Head of caudate nucleus (tissue), 42 donors: ENCODE measurements at regions of chr14 and their contacts with region 1.

Region 1: DNA sequence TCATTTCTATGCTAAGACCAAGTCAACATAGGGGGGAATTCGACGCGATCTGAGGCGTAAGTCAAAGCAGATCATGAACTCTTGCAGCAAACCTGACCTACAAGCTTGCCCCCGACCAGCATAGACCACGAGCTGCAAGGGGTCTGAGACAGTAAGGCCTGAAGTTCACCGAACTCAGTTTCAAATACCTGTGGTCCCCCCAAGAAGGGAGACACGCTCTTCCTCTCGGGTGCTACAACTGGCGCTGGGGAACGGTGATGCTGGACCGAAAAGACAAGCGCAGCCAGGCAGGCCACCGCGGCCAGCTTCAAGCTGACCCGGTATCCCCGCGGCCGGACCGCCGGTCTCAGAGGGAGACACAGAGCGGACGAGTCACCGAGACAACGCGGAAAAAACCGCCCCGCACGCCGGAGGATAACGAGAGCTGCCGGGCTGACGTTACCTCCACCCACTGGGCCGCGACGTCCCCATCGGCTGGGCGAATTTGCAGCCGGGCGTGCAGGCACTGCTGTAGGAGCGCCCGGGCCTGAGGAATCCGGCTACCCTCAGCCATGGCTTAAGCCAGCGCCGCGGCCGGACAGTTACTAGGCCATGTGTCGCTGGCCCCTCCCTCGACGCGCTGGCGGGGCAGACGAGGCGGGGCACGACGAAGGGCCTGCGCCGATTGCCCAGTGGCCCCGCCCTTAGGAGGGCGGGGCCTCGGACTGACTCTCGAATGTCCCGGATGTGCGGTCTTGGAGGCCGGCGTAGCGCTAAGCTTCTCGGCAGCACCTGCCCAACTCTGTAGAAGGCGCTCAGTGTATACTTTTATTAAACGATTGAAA is at the start of gene DTD2:
- DNase-seq: peak; percentile 92 to 99 (median 96)

Region 2: GRCh38 chr14:31388687-31389413 is 68.2 kb before region 1 on chr14:
- intact Hi-C with region 1: no loop called
- DNase-seq: peak in 16 of 42 donors; percentile 3 to 71 (median 37)

Region 3: GRCh38 chr14:31420319-31421111 is 36.5 kb before region 1 on chr14 and contains the start of gene HEATR5A:
- intact Hi-C with region 1: loop called (anchors 1 kb)
- DNase-seq: peak; percentile 87 to 98 (median 95)